CD8-positive, alpha-beta T cell (primary cell): ENCODE measurements at regions of chr11 and their contacts with region 1.

Region 1: GRCh38 chr11:76721755-76722677 is 51.5 kb upstream of the LRRC32 start:
- DNase-seq: peak; percentile 41 to 83 (median 74)
- ATAC-seq: peak; percentile 98
- H3K4me3 ChIP-seq: no peak overlapping the region
- H3K4me3 Mint-ChIP-seq: peak overlapping the region; percentile 20
- H3K27ac ChIP-seq: no peak overlapping the region
- H3K27ac Mint-ChIP-seq: no peak overlapping the region
- H3K4me1 ChIP-seq: no peaks in the 10 kb centered on the region
- H3K4me1 Mint-ChIP-seq: peaks cover 6% of the 10 kb centered on the region
- H3K27me3 ChIP-seq: peaks cover 0 to 3% of the 10 kb centered on the region in 2 experiments
- H3K27me3 Mint-ChIP-seq: peaks cover 8% of the 10 kb centered on the region
- CTCF ChIP-seq: peak; percentile 80

Region 2: GRCh38 chr11:76698321-76699060 is 23.5 kb before region 1 on chr11:
- CTCF ChIA-PET with region 1: interaction called, 11 read pairs
- POLR2A ChIA-PET with region 1: no interaction called
- intact Hi-C with region 1: no loop called
- DNase-seq: no peak
- ATAC-seq: no peak
- H3K4me3 ChIP-seq: no peak overlapping the region
- H3K4me3 Mint-ChIP-seq: no peak overlapping the region
- H3K27ac ChIP-seq: no peak overlapping the region
- H3K27ac Mint-ChIP-seq: no peak overlapping the region
- H3K4me1 ChIP-seq: no peaks in the 10 kb centered on the region
- H3K4me1 Mint-ChIP-seq: no peaks in the 10 kb centered on the region
- H3K27me3 ChIP-seq: no peaks in the 10 kb centered on the region
- H3K27me3 Mint-ChIP-seq: peaks cover 3% of the 10 kb centered on the region
- CTCF ChIP-seq: no peak

Region 3: GRCh38 chr11:76734456-76735420 is 12.7 kb after region 1 on chr11:
- CTCF ChIA-PET with region 1: interaction called, 16 read pairs
- POLR2A ChIA-PET with region 1: no interaction called
- intact Hi-C with region 1: no loop called
- DNase-seq: no peak
- ATAC-seq: no peak
- H3K4me3 ChIP-seq: no peak overlapping the region
- H3K4me3 Mint-ChIP-seq: no peak overlapping the region
- H3K27ac ChIP-seq: no peak overlapping the region
- H3K27ac Mint-ChIP-seq: no peak overlapping the region
- H3K4me1 ChIP-seq: no peaks in the 10 kb centered on the region
- H3K4me1 Mint-ChIP-seq: no peaks in the 10 kb centered on the region
- H3K27me3 ChIP-seq: no peaks in the 10 kb centered on the region
- H3K27me3 Mint-ChIP-seq: peaks cover 4% of the 10 kb centered on the region
- CTCF ChIP-seq: no peak